ENCODE measurements at regions of chr4 and their contacts with region 1.

Region 1: DNA sequence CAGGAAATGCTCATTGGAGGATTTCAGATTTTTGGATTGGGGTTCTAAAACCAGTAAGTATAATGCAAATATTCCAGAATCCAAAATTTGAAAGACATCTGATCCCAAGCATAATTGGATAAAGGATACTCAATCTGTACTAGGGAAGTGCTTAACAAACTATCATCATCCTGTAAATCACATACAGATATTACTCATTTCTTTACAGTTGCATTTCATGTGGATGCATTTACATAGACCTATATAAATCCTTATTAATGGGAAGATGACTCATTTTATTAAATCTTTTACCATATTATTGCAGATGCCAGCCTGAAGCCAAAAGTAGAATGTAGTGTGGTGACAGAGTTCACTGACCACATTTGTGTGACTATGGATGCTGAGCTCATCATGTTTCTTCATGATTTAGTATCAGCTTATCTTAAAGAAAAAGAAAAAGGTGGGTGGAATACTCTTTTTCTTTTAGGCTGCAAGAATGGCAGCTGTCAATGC is 22.4 kb upstream of the ADAD1 start:
- DNase-seq: no peak
- ATAC-seq: no peak

Region 2: DNA sequence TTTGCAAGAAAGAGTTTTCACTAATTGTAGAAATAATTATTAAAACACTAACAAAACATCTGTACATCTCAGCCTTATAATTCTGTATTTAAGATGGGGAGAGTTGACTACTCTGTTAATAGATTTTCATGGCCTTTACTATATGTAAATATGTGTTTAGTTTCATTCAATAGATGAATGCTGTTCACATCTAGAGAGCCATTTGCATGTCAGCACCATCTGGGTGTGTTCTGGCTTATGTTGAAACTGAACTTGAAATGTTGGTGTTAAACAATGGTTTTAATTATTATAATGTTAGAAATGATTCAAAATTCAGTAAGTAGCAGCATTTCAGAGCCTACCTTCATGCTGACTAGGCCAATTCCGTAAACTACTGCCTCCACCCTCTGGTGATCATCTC is 80.0 kb before region 1 on chr4:
- intact Hi-C with region 1: loop called (anchors 10 kb)
- DNase-seq: no peak
- ATAC-seq: no peak